GM13977 (cell line): ENCODE measurements at regions of chr5 and their contacts with region 1.

Region 1: GRCh38 chr5:59506285-59506877 is 387.1 kb downstream of the PDE4D start:
- DNase-seq: no peak
- CTCF ChIP-seq: peak; percentile 41

Region 2: DNA sequence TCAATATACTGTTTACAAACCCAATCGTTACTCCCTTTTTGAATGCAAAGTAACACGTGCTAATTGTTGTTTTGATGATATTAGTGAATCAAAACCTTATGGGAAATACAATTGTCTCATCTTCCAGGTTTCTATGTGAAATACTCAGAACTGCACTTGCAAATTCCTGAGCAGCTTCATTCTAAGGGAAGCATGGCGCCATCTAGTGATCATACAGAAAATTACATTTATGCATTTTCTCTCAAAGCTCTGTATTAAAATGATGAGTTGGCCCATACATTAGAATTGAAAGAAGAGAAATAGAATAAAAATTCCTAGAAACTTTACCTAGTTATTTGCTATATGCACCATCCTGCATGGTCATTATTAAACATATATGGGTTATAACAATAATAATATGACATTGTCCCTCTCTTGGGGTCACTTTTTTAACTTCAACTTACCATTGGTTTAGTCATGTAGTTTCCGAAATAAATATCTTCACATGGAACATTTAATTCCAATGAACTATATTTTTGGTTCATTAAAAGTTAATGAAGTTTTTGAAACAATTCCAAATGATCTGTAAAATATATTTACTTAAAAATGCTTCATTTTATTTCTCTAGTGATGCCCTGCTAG is 167.2 kb after region 1 on chr5:
- in situ Hi-C with region 1: loop called (anchors 25 kb)
- DNase-seq: peak; percentile 9
- CTCF ChIP-seq: peak; percentile 75